ENCODE measurements at regions of chr1 and their contacts with region 1.

Region 1: GRCh38 chr1:65419681-65420589 is 533 bp upstream of the LEPR start:
- DNase-seq: peak; percentile 99
- H3K4me3 Mint-ChIP-seq: no peak overlapping the region
- H3K27ac Mint-ChIP-seq: peak overlapping the region; percentile 85
- H3K4me1 Mint-ChIP-seq: peaks cover 26% of the 10 kb centered on the region
- H3K27me3 Mint-ChIP-seq: no peaks in the 10 kb centered on the region

Region 2: DNA sequence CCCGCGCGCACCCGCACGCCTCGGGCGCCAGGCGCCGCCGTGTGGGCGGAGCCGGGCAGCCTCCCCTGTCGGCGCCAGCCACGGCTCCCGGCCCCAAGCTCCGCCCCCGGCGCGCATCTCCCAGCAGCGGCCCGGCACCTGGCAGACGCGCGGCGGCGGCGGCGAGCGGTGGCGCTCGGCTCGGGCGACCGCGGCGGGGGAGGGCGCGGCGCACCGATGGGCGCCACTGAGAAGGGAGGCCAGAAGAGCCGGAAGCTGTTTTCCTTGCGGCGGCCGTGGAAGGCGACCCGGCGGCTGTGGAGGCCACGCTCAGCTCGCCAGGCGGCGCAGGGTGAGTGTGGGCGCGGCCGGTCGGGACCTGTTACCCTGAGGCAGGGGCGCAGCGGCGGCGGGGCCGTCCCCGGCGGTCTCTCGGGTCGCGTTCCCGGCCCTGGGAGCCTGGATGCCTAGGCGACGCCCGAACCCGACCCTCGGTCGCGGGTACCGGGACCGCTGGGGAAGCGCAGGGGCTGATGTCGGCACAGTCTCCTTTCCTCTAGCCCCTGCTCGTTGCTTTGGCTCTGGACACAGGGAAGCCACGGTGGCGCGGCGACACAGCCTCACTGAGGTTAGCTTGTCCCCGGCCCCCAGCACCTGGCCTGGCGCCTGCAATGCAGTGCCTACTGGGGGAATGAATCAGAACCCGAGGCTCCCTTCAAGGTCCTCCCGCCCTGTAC is 165.5 kb before region 1 on chr1:
- CTCF ChIA-PET with region 1: interaction called, 6 read pairs
- POLR2A ChIA-PET with region 1: interaction called, 13 read pairs
- DNase-seq: peak; percentile 89
- H3K4me3 Mint-ChIP-seq: peak overlapping the region; percentile 85
- H3K27ac Mint-ChIP-seq: no peak overlapping the region
- H3K4me1 Mint-ChIP-seq: peaks cover 28% of the 10 kb centered on the region
- H3K27me3 Mint-ChIP-seq: peaks cover 3% of the 10 kb centered on the region

Region 3: DNA sequence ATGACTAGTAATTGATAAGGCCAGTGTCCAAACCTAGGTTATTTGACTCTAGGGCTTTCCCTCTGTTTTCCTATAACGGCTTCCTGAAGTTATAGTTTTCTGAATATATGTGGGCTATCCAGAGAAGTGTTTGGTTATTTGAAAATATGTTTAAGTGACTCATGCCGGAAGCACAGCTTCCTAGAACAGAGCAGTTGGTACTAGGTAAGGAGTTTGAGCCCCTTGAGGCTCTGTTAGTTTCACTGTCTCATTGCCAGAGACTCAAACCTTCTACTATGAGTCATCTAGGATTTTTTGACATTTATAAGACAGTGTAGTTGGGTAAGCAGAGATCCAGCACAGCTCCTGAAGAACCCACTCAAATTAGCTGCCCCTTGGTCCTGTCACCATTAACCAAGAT is 26.6 kb before region 1 on chr1:
- CTCF ChIA-PET with region 1: interaction called, 13 read pairs
- POLR2A ChIA-PET with region 1: interaction called, 33 read pairs
- DNase-seq: peak; percentile 59
- H3K4me3 Mint-ChIP-seq: no peak overlapping the region
- H3K27ac Mint-ChIP-seq: peak overlapping the region; percentile 88
- H3K4me1 Mint-ChIP-seq: peaks cover 90% of the 10 kb centered on the region
- H3K27me3 Mint-ChIP-seq: no peaks in the 10 kb centered on the region

Region 4: DNA sequence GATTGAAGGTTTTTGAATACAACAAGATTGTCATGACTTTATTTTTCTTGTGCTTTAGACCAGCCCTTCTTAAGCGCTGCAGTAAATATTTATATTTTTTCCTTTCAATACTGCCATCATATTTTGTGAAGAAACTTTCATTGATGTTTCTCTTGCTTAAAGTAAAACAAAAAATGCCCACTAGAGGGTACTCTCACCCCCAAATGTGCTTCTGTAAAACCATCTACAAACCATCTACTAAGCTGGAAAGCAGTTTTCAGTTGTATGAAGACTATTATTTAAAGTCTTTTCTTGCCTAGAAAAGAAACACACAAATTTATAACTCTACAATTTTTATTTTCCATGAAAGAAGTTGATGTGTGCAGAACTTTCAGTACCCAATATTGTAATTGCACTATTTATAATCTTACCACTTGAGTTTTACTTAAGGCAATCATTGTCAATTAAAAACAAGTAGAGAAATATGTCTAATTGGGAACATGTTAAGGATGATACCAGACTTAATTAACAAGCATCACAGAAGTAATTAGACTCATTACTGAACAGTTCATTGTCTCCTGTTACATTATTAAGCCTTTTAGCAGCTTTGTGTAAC is 11.3 kb after region 1 on chr1:
- CTCF ChIA-PET with region 1: interaction called, 16 read pairs
- POLR2A ChIA-PET with region 1: interaction called, 4 read pairs
- DNase-seq: no peak
- H3K4me3 Mint-ChIP-seq: no peak overlapping the region
- H3K27ac Mint-ChIP-seq: no peak overlapping the region
- H3K4me1 Mint-ChIP-seq: peaks cover 40% of the 10 kb centered on the region
- H3K27me3 Mint-ChIP-seq: no peaks in the 10 kb centered on the region

Region 5: DNA sequence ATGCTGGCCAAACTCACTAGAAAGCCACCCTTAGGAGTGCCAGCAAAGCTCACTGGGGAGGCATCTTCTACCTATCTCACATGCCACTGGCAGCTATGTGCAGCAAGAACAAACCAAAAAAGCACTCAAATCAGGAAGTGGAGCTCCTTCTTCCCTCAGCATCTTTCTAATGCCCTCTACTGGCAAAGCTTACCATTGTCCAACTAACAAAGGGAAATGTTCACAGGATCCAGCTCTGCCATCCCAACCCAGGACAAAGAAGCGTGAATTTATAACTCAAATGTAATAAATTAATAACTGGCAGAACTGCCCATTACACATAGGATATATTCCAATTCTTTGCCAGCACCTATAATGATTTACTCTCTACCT is 39.4 kb after region 1 on chr1:
- CTCF ChIA-PET with region 1: interaction called, 10 read pairs
- POLR2A ChIA-PET with region 1: no interaction called
- DNase-seq: no peak
- H3K4me3 Mint-ChIP-seq: no peak overlapping the region
- H3K27ac Mint-ChIP-seq: no peak overlapping the region
- H3K4me1 Mint-ChIP-seq: peaks cover 30% of the 10 kb centered on the region
- H3K27me3 Mint-ChIP-seq: no peaks in the 10 kb centered on the region